Activated naive CD4-positive, alpha-beta T cell treated with anti-CD3 and anti-CD28 coated beads, Interleukin-2, amount 10 ng/mL, durations not matched to agents 7 days and 5 days (primary cell): ENCODE measurements at regions of chr3 and their contacts with region 1.

Region 1: GRCh38 chr3:108914774-108915641 is 38.7 kb downstream of the GUCA1C start:
- DNase-seq: peak; percentile 78
- H3K4me3 Mint-ChIP-seq: peak overlapping the region; percentile 15
- H3K27ac Mint-ChIP-seq: peak overlapping the region; percentile 24
- H3K4me1 Mint-ChIP-seq: peaks cover 17% of the 10 kb centered on the region
- H3K27me3 Mint-ChIP-seq: peaks cover 9% of the 10 kb centered on the region

Region 2: GRCh38 chr3:108489771-108490170 is 425.2 kb before region 1 on chr3:
- CTCF ChIA-PET with region 1: interaction called, 14 read pairs
- DNase-seq: peak; percentile 46
- H3K4me3 Mint-ChIP-seq: no peak overlapping the region
- H3K27ac Mint-ChIP-seq: no peak overlapping the region
- H3K4me1 Mint-ChIP-seq: peaks cover 2% of the 10 kb centered on the region
- H3K27me3 Mint-ChIP-seq: peaks cover 11% of the 10 kb centered on the region

Region 3: DNA sequence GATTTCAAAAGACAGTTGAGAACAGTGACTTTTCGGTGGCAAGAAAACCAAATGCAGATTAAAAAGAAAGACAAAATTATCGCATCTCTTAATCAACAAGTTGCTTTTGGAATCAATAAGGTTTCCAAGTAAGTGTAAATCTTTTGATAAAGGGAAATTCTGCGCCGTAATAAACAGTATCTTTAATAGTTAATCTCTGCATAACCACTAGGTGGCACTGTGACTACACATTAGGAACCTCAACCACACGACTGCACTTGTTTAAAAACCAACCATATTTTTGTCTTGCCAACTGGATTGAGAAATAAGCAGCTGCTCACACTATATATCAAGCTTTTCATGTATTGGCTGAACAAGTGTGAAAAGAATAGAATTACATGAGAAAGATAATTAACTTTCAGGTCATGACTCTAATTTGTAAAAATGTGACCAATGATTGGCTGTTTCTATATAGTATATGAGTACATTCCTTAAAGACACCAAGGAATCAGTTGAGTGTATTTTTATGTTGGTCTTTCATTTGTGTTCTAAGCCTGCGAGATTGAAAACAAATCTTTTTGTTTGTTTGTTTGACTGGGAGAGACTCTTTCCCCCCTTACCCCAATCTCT is 252.8 kb before region 1 on chr3:
- CTCF ChIA-PET with region 1: interaction called, 125 read pairs
- DNase-seq: peak; percentile 63
- H3K4me3 Mint-ChIP-seq: no peak overlapping the region
- H3K27ac Mint-ChIP-seq: no peak overlapping the region
- H3K4me1 Mint-ChIP-seq: peaks cover 18% of the 10 kb centered on the region
- H3K27me3 Mint-ChIP-seq: no peaks in the 10 kb centered on the region

Region 4: GRCh38 chr3:108818404-108818803 is 96.6 kb before region 1 on chr3:
- CTCF ChIA-PET with region 1: interaction called, 85 read pairs
- DNase-seq: peak; percentile 78
- H3K4me3 Mint-ChIP-seq: peak overlapping the region; percentile 6
- H3K27ac Mint-ChIP-seq: peak overlapping the region; percentile 16
- H3K4me1 Mint-ChIP-seq: peaks cover 34% of the 10 kb centered on the region
- H3K27me3 Mint-ChIP-seq: no peaks in the 10 kb centered on the region

Region 5: DNA sequence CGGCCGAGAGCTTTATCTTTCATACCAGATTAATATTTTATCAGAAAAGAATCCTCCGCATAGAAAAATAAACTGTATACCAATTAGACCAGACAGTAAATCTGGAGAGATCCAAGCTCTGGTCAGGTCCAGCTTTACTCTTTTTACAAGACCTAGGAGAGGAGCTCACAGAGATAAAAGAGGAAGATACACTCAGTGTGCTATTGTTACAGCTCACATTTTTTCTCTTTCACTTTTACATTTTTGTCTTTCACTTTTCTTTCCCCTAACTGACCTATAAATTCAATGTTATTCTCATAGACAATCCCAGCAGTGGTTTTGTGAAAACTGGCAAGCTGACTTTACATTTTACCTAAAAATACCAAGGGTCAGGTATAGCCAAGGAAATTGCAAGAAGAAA is 17.1 kb before region 1 on chr3:
- CTCF ChIA-PET with region 1: interaction called, 11 read pairs
- DNase-seq: no peak
- H3K4me3 Mint-ChIP-seq: no peak overlapping the region
- H3K27ac Mint-ChIP-seq: peak overlapping the region; percentile 68
- H3K4me1 Mint-ChIP-seq: peaks cover 22% of the 10 kb centered on the region
- H3K27me3 Mint-ChIP-seq: no peaks in the 10 kb centered on the region

Region 6: GRCh38 chr3:108931035-108931434 is 16.0 kb after region 1 on chr3:
- CTCF ChIA-PET with region 1: interaction called, 10 read pairs
- DNase-seq: no peak
- H3K4me3 Mint-ChIP-seq: no peak overlapping the region
- H3K27ac Mint-ChIP-seq: no peak overlapping the region
- H3K4me1 Mint-ChIP-seq: no peaks in the 10 kb centered on the region
- H3K27me3 Mint-ChIP-seq: peaks cover 6% of the 10 kb centered on the region